ENCODE measurements at regions of chr17 and their contacts with region 1.

Region 1: DNA sequence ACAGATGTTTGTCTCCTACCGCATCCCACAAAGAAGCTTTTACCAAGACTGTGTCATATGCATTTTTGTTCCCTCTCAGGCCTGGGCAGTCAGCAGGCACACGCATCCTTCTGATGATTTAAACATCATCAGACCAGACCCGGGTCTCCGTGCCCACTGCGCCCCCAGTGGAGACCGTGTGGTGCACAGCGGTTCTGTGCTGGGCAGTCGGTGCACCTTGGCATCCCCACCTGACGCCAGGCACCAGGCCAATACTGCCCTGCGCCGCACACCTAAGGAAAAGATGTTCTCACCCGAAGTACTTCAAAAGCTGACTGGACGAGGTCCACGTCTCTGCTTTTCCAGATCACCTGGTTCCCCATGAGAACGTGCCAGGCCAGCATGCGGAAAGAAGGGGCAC is 10.6 kb upstream of the PLD6 start:
- DNase-seq: no peak
- H3K4me3 ChIP-seq: no peak overlapping the region
- H3K27ac ChIP-seq: no peak overlapping the region
- H3K4me1 ChIP-seq: no peaks in the 10 kb centered on the region
- H3K27me3 ChIP-seq: no peaks in the 10 kb centered on the region
- CTCF ChIP-seq: peak; percentile 28 to 35

Region 2: GRCh38 chr17:16973760-16974540 is 242.8 kb before region 1 on chr17:
- CTCF ChIA-PET with region 1: no interaction called
- dilution Hi-C with region 1: loop called (anchors 5 kb)
- in situ Hi-C with region 1: no loop called
- intact Hi-C with region 1: no loop called
- DNase-seq: no peak
- H3K4me3 ChIP-seq: no peak overlapping the region
- H3K27ac ChIP-seq: no peak overlapping the region
- H3K4me1 ChIP-seq: no peaks in the 10 kb centered on the region
- H3K27me3 ChIP-seq: peaks cover 2% of the 10 kb centered on the region
- CTCF ChIP-seq: no peak

Region 3: GRCh38 chr17:17171991-17172939 is 44.5 kb before region 1 on chr17:
- CTCF ChIA-PET with region 1: no interaction called
- dilution Hi-C with region 1: loop called (anchors 5 kb)
- in situ Hi-C with region 1: no loop called
- intact Hi-C with region 1: no loop called
- DNase-seq: no peak
- H3K4me3 ChIP-seq: no peak overlapping the region
- H3K27ac ChIP-seq: no peak overlapping the region
- H3K4me1 ChIP-seq: peaks cover 40% of the 10 kb centered on the region
- H3K27me3 ChIP-seq: no peaks in the 10 kb centered on the region
- CTCF ChIP-seq: peak; percentile 15 to 36

Region 4: GRCh38 chr17:17269926-17270773 is 53.4 kb after region 1 on chr17:
- CTCF ChIA-PET with region 1: no interaction called
- dilution Hi-C with region 1: loop called (anchors 5 kb)
- in situ Hi-C with region 1: no loop called
- intact Hi-C with region 1: no loop called
- DNase-seq: no peak
- H3K4me3 ChIP-seq: no peak overlapping the region
- H3K27ac ChIP-seq: no peak overlapping the region
- H3K4me1 ChIP-seq: no peaks in the 10 kb centered on the region
- H3K27me3 ChIP-seq: no peaks in the 10 kb centered on the region
- CTCF ChIP-seq: peak; percentile 17 to 37

Region 5: GRCh38 chr17:17387830-17388441 is 171.2 kb after region 1 on chr17:
- CTCF ChIA-PET with region 1: no interaction called
- dilution Hi-C with region 1: no loop called
- in situ Hi-C with region 1: no loop called
- intact Hi-C with region 1: no loop called
- DNase-seq: peak; percentile 19
- H3K4me3 ChIP-seq: no peak overlapping the region
- H3K27ac ChIP-seq: peak overlapping the region; percentile 18
- H3K4me1 ChIP-seq: peaks cover 18% of the 10 kb centered on the region
- H3K27me3 ChIP-seq: no peaks in the 10 kb centered on the region
- CTCF ChIP-seq: peak; percentile 52 to 61

Region 6: GRCh38 chr17:17403899-17404576 is 187.3 kb after region 1 on chr17:
- CTCF ChIA-PET with region 1: no interaction called
- dilution Hi-C with region 1: no loop called
- in situ Hi-C with region 1: no loop called
- intact Hi-C with region 1: no loop called
- DNase-seq: no peak
- H3K4me3 ChIP-seq: no peak overlapping the region
- H3K27ac ChIP-seq: no peak overlapping the region
- H3K4me1 ChIP-seq: peaks cover 10% of the 10 kb centered on the region
- H3K27me3 ChIP-seq: no peaks in the 10 kb centered on the region
- CTCF ChIP-seq: no peak

Measured in mammary epithelial cell (primary cell).